ENCODE measurements at regions of chr6 and their contacts with region 1.

Region 1: GRCh38 chr6:16729183-16729691 is 32.0 kb downstream of the ATXN1 start:
- DNase-seq: no peak
- H3K4me3 Mint-ChIP-seq: no peak overlapping the region
- H3K27ac Mint-ChIP-seq: peak overlapping the region; percentile 54
- H3K4me1 Mint-ChIP-seq: peaks cover 24% of the 10 kb centered on the region
- H3K27me3 Mint-ChIP-seq: no peaks in the 10 kb centered on the region
- CTCF ChIP-seq: no peak

Region 2: DNA sequence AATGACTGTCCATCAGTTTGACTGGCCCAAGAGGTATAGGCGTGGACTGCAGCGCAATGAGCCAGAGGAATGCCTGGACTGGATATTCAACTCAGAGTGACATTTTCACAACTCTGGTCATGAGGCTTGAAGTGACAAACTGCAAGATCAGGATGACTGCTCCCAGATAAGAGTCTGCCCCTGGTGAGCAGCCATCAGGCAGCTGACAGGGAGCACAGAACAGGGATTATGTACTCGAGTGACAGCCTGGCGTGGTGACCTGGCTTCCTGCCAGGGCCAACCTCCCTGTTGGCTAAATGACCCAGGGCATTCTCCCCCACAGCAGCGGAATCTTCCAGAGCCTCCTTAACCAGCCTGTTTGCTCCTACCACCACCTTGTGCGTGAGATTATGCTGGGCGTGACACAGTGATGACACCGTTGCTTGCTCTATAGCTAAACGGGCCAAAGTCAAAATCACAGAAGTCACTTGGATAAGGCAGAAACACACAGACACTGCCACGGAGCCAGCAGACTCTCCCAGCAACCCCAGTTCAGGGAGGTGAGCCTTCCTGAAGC is 1692.5 kb before region 1 on chr6:
- CTCF ChIA-PET with region 1: interaction called, 11 read pairs
- intact Hi-C with region 1: no loop called
- DNase-seq: peak; percentile 13
- H3K4me3 Mint-ChIP-seq: no peak overlapping the region
- H3K27ac Mint-ChIP-seq: no peak overlapping the region
- H3K4me1 Mint-ChIP-seq: no peaks in the 10 kb centered on the region
- H3K27me3 Mint-ChIP-seq: no peaks in the 10 kb centered on the region
- CTCF ChIP-seq: no peak

Region 3: GRCh38 chr6:16752236-16752867 is 23.1 kb after region 1 on chr6:
- CTCF ChIA-PET with region 1: interaction called, 3 read pairs
- intact Hi-C with region 1: loop called (anchors 2 kb)
- DNase-seq: no peak
- H3K4me3 Mint-ChIP-seq: peak overlapping the region; percentile 34
- H3K27ac Mint-ChIP-seq: peak overlapping the region; percentile 97
- H3K4me1 Mint-ChIP-seq: peaks cover 29% of the 10 kb centered on the region
- H3K27me3 Mint-ChIP-seq: no peaks in the 10 kb centered on the region
- CTCF ChIP-seq: no peak